Body of pancreas (tissue), 4 donors: ENCODE measurements at regions of chr2 and their contacts with region 1.

Region 1: DNA sequence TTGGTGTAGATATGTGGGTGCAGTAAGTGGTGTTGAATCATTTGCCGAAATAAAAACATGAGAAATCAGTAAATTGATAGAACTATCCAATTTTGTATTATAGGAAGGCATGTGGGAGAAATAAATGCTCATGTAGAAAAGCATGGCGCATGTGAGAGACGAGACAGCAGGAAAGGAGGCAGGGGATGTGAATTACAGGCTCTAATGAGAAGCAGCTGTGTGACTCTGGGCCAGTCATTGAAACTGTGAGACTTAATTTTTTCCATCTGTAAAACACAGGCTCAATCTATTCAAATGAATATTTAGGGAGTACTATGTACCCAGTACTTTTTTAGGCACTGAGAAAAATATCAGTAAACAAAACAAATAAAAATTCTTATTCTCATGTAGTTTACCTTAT is 42.6 kb upstream of the MAP3K20 start:
- DNase-seq: no peak
- ATAC-seq: no peak
- H3K4me3 ChIP-seq: no peak overlapping the region
- H3K27ac ChIP-seq: no peak overlapping the region
- H3K4me1 ChIP-seq: peaks cover 21% of the 10 kb centered on the region
- H3K27me3 ChIP-seq: no peaks in the 10 kb centered on the region
- CTCF ChIP-seq: no peak
- POLR2A ChIP-seq: no peak

Region 2: GRCh38 chr2:173205375-173205774 is 172.3 kb after region 1 on chr2:
- intact Hi-C with region 1: loop called (anchors 5 kb)
- DNase-seq: peak in 3 of 4 donors; percentile 38 to 61 (median 43)
- ATAC-seq: peak; percentile 68
- H3K4me3 ChIP-seq: no peak overlapping the region
- H3K27ac ChIP-seq: no peak overlapping the region
- H3K4me1 ChIP-seq: peaks cover 1% of the 10 kb centered on the region
- H3K27me3 ChIP-seq: no peaks in the 10 kb centered on the region
- CTCF ChIP-seq: no peak
- POLR2A ChIP-seq: no peak

Region 3: GRCh38 chr2:173249661-173250641 is 216.9 kb after region 1 on chr2:
- intact Hi-C with region 1: no loop called
- DNase-seq: no peak
- ATAC-seq: no peak
- H3K4me3 ChIP-seq: no peak overlapping the region
- H3K27ac ChIP-seq: no peak overlapping the region
- H3K4me1 ChIP-seq: peaks cover 8% of the 10 kb centered on the region
- H3K27me3 ChIP-seq: no peaks in the 10 kb centered on the region
- CTCF ChIP-seq: no peak
- POLR2A ChIP-seq: no peak